CD4-positive, alpha-beta T cell (primary cell): ENCODE measurements at regions of chr17 and their contacts with region 1.

Region 1: GRCh38 chr17:79915850-79916430 is 76.7 kb upstream of the CBX4 start:
- DNase-seq: peak in 5 of 14 experiments; percentile 16 to 48 (median 41)
- ATAC-seq: no peak
- H3K4me3 ChIP-seq: no peak overlapping the region
- H3K4me3 Mint-ChIP-seq: no peak overlapping the region
- H3K27ac ChIP-seq: no peak overlapping the region
- H3K27ac Mint-ChIP-seq: no peak overlapping the region
- H3K4me1 ChIP-seq: no peaks in the 10 kb centered on the region
- H3K4me1 Mint-ChIP-seq: no peaks in the 10 kb centered on the region
- H3K27me3 ChIP-seq: no peaks in the 10 kb centered on the region
- H3K27me3 Mint-ChIP-seq: peaks cover 24% of the 10 kb centered on the region
- CTCF ChIP-seq: peak; percentile 14

Region 2: GRCh38 chr17:79741751-79742588 is 174.0 kb before region 1 on chr17:
- CTCF ChIA-PET with region 1: interaction called, 6 read pairs
- POLR2A ChIA-PET with region 1: no interaction called
- intact Hi-C with region 1: loop called (anchors 2 to 5 kb)
- DNase-seq: peak; percentile 59 to 85 (median 70)
- ATAC-seq: peak; percentile 55
- H3K4me3 ChIP-seq: no peak overlapping the region
- H3K4me3 Mint-ChIP-seq: no peak overlapping the region
- H3K27ac ChIP-seq: no peak overlapping the region
- H3K27ac Mint-ChIP-seq: no peak overlapping the region
- H3K4me1 ChIP-seq: peaks cover 29% of the 10 kb centered on the region
- H3K4me1 Mint-ChIP-seq: peaks cover 14% of the 10 kb centered on the region
- H3K27me3 ChIP-seq: peaks cover 29 to 30% of the 10 kb centered on the region in 2 experiments
- H3K27me3 Mint-ChIP-seq: peaks cover 54% of the 10 kb centered on the region
- CTCF ChIP-seq: peak; percentile 94

Region 3: GRCh38 chr17:79789534-79790353 is 126.2 kb before region 1 on chr17:
- CTCF ChIA-PET with region 1: no interaction called
- POLR2A ChIA-PET with region 1: no interaction called
- intact Hi-C with region 1: loop called in 1 of 2 experiments (anchors 1 kb)
- DNase-seq: peak in 3 of 14 experiments; percentile 48 to 60 (median 56)
- ATAC-seq: peak; percentile 16
- H3K4me3 ChIP-seq: no peak overlapping the region
- H3K4me3 Mint-ChIP-seq: no peak overlapping the region
- H3K27ac ChIP-seq: no peak overlapping the region
- H3K27ac Mint-ChIP-seq: no peak overlapping the region
- H3K4me1 ChIP-seq: peaks cover 32% of the 10 kb centered on the region
- H3K4me1 Mint-ChIP-seq: peaks cover 9% of the 10 kb centered on the region
- H3K27me3 ChIP-seq: peaks cover 63 to 80% of the 10 kb centered on the region in 2 experiments
- H3K27me3 Mint-ChIP-seq: peaks cover 70% of the 10 kb centered on the region
- CTCF ChIP-seq: peak; percentile 81